ENCODE measurements at regions of chr9 and their contacts with region 1.

Region 1: GRCh38 chr9:19551124-19551929 is 142.5 kb downstream of the ACER2 start:
- DNase-seq: no peak
- H3K4me3 ChIP-seq: no peak overlapping the region
- H3K27ac ChIP-seq: no peak overlapping the region
- H3K4me1 ChIP-seq: no peaks in the 10 kb centered on the region
- H3K27me3 ChIP-seq: no peaks in the 10 kb centered on the region
- CTCF ChIP-seq: no peak

Region 2: DNA sequence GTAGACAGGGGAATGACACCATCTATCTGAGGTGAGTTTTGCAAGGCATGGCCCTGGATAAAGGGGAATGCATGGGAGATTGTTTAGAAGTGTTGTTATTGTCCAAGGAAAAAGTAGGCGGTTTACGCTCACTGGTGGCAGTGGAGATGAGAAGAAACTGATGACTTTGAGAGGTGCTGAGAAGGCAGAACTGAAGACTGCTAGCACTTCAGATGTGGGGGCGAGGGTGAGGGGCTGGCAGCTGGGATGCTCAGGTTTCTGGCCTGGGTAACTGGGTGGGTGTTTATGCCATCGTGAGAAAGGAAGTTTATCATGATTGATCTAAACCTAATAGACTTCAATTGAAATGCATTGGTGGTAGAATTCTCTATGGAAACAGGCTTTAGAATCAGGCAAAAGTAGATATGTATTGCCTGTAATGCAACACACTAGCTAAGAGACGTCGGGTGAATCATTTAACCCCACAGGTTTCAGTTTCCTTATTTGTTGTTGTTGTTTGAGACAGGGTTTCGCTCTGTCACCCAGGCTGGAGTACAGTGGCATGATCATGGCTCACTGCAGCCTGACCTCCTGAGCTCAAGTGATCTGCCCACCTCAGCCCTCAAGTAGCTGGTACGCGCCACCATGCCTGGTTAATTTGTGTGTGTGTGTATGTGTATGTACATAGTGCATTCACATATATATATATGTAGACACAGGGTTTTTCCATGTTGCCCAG is 114.0 kb after region 1 on chr9:
- CTCF ChIA-PET with region 1: no interaction called
- dilution Hi-C with region 1: no loop called
- in situ Hi-C with region 1: loop called in 1 of 2 experiments (anchors 25 kb)
- intact Hi-C with region 1: no loop called
- DNase-seq: no peak
- H3K4me3 ChIP-seq: no peak overlapping the region
- H3K27ac ChIP-seq: no peak overlapping the region
- H3K4me1 ChIP-seq: no peaks in the 10 kb centered on the region
- H3K27me3 ChIP-seq: peaks cover 2% of the 10 kb centered on the region
- CTCF ChIP-seq: no peak

Measured in mammary epithelial cell (primary cell).